AG04449 (cell line): ENCODE measurements at regions of chr11 and their contacts with region 1.

Region 1: GRCh38 chr11:31958076-31958735 is 132.7 kb upstream of the RCN1 start:
- DNase-seq: no peak
- H3K4me3 ChIP-seq: no peak overlapping the region
- CTCF ChIP-seq: peak; percentile 86

Region 2: DNA sequence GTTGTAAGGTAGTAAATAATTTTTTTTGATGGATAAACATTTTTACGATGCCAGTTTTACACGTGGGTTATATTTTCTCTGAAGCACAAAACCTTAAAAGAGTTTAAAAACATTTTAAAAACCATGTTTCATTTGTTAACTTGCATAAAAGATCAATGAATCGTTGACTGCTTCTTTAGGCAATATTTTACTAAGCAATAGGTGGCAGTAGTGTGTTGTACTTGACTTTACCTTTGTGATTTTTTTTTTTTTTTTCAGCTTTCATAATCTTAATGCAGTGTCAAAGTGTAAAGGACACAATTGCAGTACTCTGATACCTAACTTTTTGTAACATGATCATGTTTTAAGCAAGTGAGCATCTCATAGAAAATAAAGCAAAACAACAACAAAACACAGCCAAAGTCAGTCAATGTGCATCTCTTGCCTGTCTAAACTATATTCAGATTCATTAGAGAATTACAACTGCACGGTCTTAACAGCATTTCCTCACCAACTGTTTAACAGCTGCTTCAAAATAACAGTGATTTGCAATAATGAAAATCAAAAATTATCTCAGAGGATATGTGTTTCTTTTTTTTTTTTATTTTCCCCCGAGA is 560.9 kb before region 1 on chr11:
- CTCF ChIA-PET with region 1: interaction called, 28 read pairs
- POLR2A ChIA-PET with region 1: no interaction called
- DNase-seq: no peak
- H3K4me3 ChIP-seq: no peak overlapping the region
- CTCF ChIP-seq: peak; percentile 30

Region 3: DNA sequence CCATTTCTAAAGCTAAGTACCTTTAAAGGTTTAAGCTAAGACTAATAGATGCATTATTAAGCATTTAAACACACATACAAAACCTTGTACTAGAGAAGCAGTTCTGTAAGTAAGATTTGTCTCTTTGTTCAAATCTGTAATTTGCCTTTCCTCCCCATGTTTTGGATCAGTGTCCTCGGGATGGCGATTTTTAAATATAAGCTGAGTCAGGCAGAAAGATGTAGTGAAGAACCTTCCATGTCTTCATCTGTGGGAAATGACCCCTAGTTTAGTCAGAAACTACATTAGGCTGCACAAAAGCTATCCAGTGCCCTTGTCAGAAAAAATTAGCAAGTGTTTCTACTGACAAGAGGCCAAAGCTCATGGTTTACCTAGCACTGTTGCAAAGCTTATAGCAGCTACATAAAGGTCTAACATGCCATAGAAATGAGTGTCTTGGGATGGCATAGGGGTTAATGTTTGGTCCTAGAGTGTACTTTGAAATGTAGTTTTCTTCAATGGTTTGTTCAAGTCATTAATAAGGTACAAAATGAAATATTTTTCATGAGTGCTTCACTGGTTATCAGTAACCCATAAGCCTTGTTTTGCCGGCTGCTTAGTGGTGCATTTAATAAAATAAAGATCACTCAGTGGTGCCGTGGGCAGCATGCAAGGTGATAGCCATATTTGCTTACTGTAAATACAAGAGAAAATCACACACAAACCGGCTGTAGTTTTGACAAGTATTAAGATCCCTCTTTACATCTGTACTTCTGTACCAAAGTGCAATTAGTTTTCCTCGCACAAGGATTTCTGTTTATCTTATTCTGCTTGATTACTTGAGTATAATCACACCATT is 308.9 kb before region 1 on chr11:
- CTCF ChIA-PET with region 1: interaction called, 63 read pairs
- POLR2A ChIA-PET with region 1: no interaction called
- DNase-seq: no peak
- H3K4me3 ChIP-seq: no peak overlapping the region
- CTCF ChIP-seq: no peak

Region 4: GRCh38 chr11:31926106-31926505 is 32.1 kb before region 1 on chr11:
- CTCF ChIA-PET with region 1: interaction called, 49 read pairs
- POLR2A ChIA-PET with region 1: no interaction called
- DNase-seq: no peak
- H3K4me3 ChIP-seq: no peak overlapping the region
- CTCF ChIP-seq: no peak

Region 5: DNA sequence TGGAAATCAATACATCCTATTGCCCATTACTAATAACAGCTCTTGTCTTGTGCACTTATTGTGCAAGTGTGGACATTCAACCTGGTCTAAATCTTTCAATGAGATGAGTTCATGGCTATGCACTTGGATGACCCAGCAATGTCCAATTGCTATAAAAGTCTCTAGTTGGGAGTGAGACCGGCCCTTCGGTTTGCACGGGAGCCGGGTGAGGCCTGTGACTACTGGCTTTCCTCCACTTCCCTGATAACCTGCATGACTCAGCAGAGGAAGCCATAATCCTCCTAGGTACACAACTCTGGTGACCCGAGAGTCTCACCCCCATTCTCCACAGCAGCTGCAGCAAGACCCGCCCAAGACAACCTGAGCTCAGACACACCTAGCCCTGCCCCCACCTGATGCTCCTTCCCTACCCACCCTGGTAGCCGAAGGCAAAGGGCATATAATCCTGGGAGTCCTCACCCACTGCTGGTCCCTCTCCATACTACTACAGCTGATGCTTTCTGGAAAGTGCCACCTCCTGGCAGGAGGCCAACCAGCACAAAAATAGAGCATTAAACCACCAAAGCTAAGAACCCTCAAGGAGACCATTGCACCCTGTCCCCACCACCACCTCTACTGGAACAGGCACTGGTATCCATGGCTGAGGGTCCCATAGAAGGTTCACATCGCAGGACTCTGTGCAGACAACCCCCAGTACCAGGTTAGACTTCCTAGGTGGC is 11.0 kb before region 1 on chr11:
- CTCF ChIA-PET with region 1: interaction called, 43 read pairs
- POLR2A ChIA-PET with region 1: no interaction called
- DNase-seq: no peak
- H3K4me3 ChIP-seq: no peak overlapping the region
- CTCF ChIP-seq: no peak

Region 6: GRCh38 chr11:31987118-31988005 is 29.2 kb after region 1 on chr11:
- CTCF ChIA-PET with region 1: interaction called, 13 read pairs
- POLR2A ChIA-PET with region 1: no interaction called
- DNase-seq: no peak
- H3K4me3 ChIP-seq: peak overlapping the region; percentile 29; the same call in 1 of the 2 replicates
- CTCF ChIP-seq: no peak

Region 7: DNA sequence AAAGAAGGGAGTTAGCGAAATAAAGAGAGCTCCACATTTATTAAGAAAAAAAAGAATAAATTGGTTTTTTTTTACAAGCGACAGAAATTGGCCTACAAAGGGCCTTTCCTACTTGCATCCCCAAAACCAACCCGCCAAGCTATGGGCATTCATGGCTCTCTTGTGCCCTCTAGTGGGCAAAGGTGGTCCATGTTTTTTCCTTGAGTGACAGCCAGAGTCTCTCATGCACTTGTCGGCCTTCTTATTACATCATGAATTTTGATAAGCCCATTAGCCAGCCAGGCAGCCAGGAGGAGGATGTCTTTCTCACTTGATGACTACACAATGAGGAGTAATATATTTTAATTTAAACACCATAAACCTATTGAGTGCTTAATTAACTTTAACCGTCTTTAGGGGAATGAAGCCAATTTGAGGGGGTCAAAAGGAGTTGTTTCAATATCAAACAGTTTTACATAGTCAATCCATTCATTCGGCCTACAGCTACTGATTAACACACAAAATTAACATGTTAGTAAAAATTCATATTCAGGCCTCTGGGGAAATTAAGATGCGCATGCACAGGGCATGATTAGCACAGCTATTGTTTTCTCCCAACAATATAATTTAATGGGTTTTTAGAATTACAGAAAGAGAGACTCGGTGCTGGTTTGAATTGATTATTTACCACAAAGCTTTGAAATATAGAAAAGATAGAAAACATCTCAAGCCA is 218.2 kb after region 1 on chr11:
- CTCF ChIA-PET with region 1: interaction called, 13 read pairs
- POLR2A ChIA-PET with region 1: no interaction called
- DNase-seq: peak; percentile 10
- H3K4me3 ChIP-seq: no peak overlapping the region
- CTCF ChIP-seq: peak; percentile 79